HepG2 (cell line): ENCODE measurements at regions of chr10 and their contacts with region 1.

Region 1: GRCh38 chr10:88932539-88933256 is 19.9 kb downstream of the ACTA2 start:
- DNase-seq: peak; percentile 60
- ATAC-seq: peak; percentile 92
- H3K4me3 ChIP-seq: no peak overlapping the region
- H3K27ac ChIP-seq: no peak overlapping the region
- H3K4me1 ChIP-seq: peaks cover 8% of the 10 kb centered on the region
- H3K27me3 ChIP-seq: no peaks in the 10 kb centered on the region
- CTCF ChIP-seq: peak; percentile 86
- EP300 ChIP-seq: no peak
- POLR2A ChIP-seq: no peak
- RAD21 ChIP-seq: peak; percentile 57

Region 2: DNA sequence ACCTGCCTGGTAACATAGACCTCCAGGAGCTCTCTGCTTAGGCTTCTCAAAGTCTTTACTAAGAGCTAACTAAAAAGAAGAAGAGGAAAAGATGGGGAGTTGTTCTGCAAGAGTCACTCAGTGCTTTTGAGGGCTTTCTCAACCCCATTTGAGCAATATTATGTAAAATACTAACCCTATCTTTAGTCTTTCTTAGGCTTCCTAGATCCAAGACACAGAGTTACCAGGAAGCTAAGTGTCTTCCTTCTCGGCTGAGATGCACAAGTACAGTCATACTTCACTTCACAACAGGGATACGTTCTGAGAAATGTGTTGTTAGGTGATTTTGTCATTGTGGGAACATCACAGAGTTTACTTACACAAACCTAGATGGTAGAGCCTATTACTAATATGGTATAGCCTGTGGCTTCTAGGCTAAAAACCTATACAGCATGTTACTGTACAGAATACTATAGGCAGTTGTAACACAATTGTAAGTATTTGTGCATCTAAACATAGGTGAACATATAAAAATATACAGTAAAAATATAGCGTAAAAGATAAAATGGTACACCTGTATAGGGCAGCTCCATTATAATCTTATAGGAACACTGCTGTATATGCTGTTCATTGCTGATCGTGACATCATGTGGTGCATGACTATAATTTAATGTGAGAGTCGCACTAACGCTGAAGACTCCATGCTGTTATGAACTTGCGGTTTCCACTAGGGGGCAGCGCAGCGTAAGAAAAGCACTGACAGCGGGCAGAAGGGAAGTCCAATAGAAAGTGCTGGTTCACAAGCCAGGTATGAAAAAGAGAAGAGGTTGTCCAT is 97.4 kb before region 1 on chr10:
- CTCF ChIA-PET with region 1: interaction called, 45 read pairs
- POLR2A ChIA-PET with region 1: no interaction called
- in situ Hi-C with region 1: loop called (anchors 5 kb)
- intact Hi-C with region 1: loop called (anchors 1 kb)
- DNase-seq: peak; percentile 68
- ATAC-seq: peak; percentile 99
- H3K4me3 ChIP-seq: no peak overlapping the region
- H3K27ac ChIP-seq: no peak overlapping the region
- H3K4me1 ChIP-seq: no peaks in the 10 kb centered on the region
- H3K27me3 ChIP-seq: no peaks in the 10 kb centered on the region
- CTCF ChIP-seq: peak; percentile 90
- EP300 ChIP-seq: no peak
- POLR2A ChIP-seq: no peak
- RAD21 ChIP-seq: no peak; the same call in 1 of the 2 replicates

Region 3: GRCh38 chr10:88865281-88865876 is 67.3 kb before region 1 on chr10:
- CTCF ChIA-PET with region 1: no interaction called
- POLR2A ChIA-PET with region 1: no interaction called
- in situ Hi-C with region 1: no loop called
- intact Hi-C with region 1: no loop called
- DNase-seq: no peak
- ATAC-seq: no peak
- H3K4me3 ChIP-seq: no peak overlapping the region
- H3K27ac ChIP-seq: no peak overlapping the region
- H3K4me1 ChIP-seq: no peaks in the 10 kb centered on the region
- H3K27me3 ChIP-seq: no peaks in the 10 kb centered on the region
- CTCF ChIP-seq: no peak
- EP300 ChIP-seq: no peak
- POLR2A ChIP-seq: no peak
- RAD21 ChIP-seq: no peak

Region 4: DNA sequence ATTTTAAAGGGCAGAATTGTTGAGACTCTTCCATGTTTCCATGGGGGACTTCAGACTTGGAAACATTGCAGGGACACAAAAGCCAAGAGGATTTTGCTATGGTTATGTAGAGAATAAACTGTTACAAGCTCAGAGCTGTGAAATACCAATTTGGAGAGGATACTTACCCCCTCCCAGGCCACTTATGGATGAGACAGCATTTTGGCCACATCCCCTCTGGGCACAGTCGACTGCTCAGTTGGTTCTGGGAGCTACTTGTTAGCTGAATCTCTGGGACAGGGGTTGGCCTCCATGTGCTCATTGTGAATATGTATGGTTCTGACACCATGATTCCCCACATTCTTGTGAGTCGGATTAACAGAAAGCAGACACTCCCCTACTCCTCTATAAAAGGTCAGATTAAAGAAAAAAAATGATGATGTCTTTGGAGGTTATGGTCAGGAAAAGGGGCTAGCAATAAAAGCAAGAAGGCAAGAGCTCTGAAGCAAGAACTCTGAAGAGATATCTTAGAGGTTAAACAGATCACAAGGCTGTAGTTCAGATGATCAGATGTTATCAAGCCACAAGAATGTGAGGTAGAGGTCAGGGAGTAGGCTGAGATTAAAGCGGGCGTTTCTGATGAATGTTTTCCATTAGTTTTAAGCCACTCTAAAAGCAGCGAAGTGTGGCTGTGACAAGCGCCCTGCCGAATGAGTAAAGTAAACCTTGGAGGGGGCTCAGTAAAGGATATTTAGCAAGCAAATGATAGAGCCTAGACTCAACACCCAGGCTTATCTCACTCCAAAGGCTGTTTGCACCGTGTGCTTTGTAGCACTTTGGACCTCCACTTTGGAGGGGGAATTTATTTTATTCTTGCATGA is 35.5 kb before region 1 on chr10:
- CTCF ChIA-PET with region 1: no interaction called
- POLR2A ChIA-PET with region 1: no interaction called
- in situ Hi-C with region 1: no loop called
- intact Hi-C with region 1: loop called (anchors 5 kb)
- DNase-seq: peak; percentile 44
- ATAC-seq: peak; percentile 68
- H3K4me3 ChIP-seq: peak overlapping the region in 1 of 3 experiments; percentile 17; a peak in 1 of 6 replicates
- H3K27ac ChIP-seq: peak overlapping the region; percentile 24
- H3K4me1 ChIP-seq: peaks cover 34% of the 10 kb centered on the region
- H3K27me3 ChIP-seq: no peaks in the 10 kb centered on the region
- CTCF ChIP-seq: no peak
- EP300 ChIP-seq: no peak
- POLR2A ChIP-seq: no peak
- RAD21 ChIP-seq: no peak

Region 5: GRCh38 chr10:89029785-89030437 is 97.2 kb after region 1 on chr10:
- CTCF ChIA-PET with region 1: no interaction called
- POLR2A ChIA-PET with region 1: no interaction called
- in situ Hi-C with region 1: no loop called
- intact Hi-C with region 1: loop called (anchors 5 kb)
- DNase-seq: peak; percentile 53
- ATAC-seq: peak; percentile 79
- H3K4me3 ChIP-seq: no peak overlapping the region
- H3K27ac ChIP-seq: no peak overlapping the region
- H3K4me1 ChIP-seq: no peaks in the 10 kb centered on the region
- H3K27me3 ChIP-seq: no peaks in the 10 kb centered on the region
- CTCF ChIP-seq: peak; percentile 86
- EP300 ChIP-seq: no peak
- POLR2A ChIP-seq: no peak
- RAD21 ChIP-seq: peak; percentile 31; the same call in 1 of the 2 replicates

Region 6: DNA sequence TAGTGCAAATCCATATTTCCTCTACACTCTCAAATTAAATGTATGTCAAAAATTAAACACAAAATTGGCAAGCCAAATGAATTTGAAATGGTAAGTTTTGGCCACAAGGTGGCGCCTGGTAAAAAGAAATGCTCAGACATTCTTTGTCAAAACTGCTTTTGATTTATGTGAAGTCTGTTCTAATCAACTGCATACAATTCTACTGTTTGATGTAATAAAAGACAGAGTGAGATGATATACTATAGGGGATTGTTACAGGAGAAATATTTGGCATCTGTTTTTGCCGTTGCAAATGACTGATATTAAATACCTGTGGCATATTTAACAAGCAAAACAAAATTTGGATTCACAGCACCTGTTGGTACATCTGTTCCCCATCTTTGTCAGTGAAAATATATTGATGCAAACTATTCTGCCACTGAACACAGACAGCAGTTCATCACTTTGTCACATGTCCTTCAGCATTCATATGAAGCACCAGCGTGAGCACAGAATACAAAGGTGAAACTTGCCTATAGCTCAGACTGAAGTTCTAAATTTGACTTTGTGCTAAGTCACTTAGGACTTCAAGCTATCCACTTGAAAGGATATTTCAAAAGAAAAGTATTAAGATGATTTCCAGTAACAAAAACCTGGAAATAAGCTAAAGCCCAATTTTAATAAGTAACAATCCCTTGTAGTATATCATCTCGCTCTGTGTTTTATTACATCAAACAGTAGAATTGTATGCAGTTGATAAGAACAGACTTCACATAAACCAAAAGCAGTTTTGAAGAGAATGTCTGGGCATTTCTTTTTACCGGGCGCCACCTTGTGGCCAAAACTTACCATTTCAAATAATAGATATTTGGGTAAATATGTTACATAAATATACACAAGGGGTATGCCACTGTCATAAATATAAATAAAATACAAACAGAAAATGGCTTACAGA is 284.6 kb after region 1 on chr10:
- CTCF ChIA-PET with region 1: interaction called, 14 read pairs
- POLR2A ChIA-PET with region 1: no interaction called
- in situ Hi-C with region 1: no loop called
- intact Hi-C with region 1: loop called (anchors 1 kb)
- DNase-seq: peak; percentile 43
- ATAC-seq: no peak
- H3K4me3 ChIP-seq: no peak overlapping the region
- H3K27ac ChIP-seq: no peak overlapping the region
- H3K4me1 ChIP-seq: no peaks in the 10 kb centered on the region
- H3K27me3 ChIP-seq: no peaks in the 10 kb centered on the region
- CTCF ChIP-seq: peak; percentile 59
- EP300 ChIP-seq: no peak
- POLR2A ChIP-seq: no peak
- RAD21 ChIP-seq: no peak